ENCODE measurements at regions of chr3 and their contacts with region 1.

Region 1: DNA sequence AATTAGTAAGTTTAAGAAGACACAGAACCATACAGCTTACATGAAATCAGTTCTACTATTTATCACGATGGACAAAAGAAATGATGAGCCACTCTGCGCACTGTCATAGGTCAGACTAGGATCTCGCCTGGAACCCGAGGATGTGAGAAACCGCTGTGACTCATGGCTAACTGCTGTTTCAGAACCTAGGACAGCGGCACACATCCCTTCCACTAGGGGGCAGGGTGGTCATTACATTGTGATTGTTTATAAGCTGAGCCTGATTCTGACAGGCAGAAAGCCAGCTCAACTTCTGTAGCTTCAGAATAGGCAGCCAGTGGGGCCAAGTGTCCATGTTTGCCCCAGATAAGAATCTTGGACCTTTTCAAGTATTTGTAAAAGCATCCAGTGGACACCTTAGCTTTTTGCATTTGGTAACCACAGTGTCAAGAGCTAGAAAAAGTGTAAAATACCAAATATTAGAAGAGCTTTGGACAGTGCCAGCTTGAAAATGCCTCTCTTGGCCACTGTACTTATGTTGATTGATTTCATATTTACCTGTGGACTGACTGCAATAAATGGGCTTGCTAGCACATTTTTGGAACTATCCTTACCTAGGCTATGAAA is 115.8 kb downstream of the KBTBD8 start:
- DNase-seq: peak; percentile 81
- H3K4me3 ChIP-seq: no peak overlapping the region
- H3K27ac ChIP-seq: no peak overlapping the region
- H3K4me1 ChIP-seq: peaks cover 0 to 12% (median 12%) of the 10 kb centered on the region in 4 donors
- H3K27me3 ChIP-seq: no peaks in the 10 kb centered on the region
- CTCF ChIP-seq: peak; percentile 72 to 85 (median 78)
- EP300 ChIP-seq: no peak
- POLR2A ChIP-seq: no peak

Region 2: DNA sequence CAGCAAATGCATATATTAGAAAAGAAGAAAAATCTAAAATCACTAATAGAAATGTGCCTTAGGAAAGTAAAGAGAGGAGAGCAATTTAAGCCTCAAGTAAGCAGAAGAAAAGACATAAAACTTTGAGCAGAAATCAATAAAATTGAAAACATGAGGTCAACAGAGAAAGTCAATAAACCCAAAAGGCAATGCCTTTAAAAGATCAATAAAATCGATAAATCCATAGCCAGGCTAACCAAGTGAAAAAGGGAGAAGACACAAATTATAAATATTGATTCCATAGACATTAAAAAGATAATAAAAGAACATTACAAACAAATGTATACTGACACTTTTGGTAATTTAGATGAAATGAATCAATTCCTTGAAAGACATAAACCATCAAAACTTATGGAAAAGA is 641.7 kb after region 1 on chr3:
- intact Hi-C with region 1: no loop called
- DNase-seq: no peak
- H3K4me3 ChIP-seq: no peak overlapping the region
- H3K27ac ChIP-seq: no peak overlapping the region
- H3K4me1 ChIP-seq: no peaks in the 10 kb centered on the region
- H3K27me3 ChIP-seq: no peaks in the 10 kb centered on the region
- CTCF ChIP-seq: no peak
- EP300 ChIP-seq: no peak
- POLR2A ChIP-seq: no peak

Region 3: GRCh38 chr3:68893600-68894239 is 1779.8 kb after region 1 on chr3:
- intact Hi-C with region 1: loop called (anchors 5 kb)
- DNase-seq: no peak
- H3K4me3 ChIP-seq: no peak overlapping the region
- H3K27ac ChIP-seq: no peak overlapping the region
- H3K4me1 ChIP-seq: peaks cover 0 to 16% (median 12%) of the 10 kb centered on the region in 4 donors
- H3K27me3 ChIP-seq: no peaks in the 10 kb centered on the region
- CTCF ChIP-seq: peak in 2 of 4 experiments; percentile 33 to 52
- EP300 ChIP-seq: no peak
- POLR2A ChIP-seq: no peak